ENCODE measurements at regions of chr6 and their contacts with region 1.

Region 1: DNA sequence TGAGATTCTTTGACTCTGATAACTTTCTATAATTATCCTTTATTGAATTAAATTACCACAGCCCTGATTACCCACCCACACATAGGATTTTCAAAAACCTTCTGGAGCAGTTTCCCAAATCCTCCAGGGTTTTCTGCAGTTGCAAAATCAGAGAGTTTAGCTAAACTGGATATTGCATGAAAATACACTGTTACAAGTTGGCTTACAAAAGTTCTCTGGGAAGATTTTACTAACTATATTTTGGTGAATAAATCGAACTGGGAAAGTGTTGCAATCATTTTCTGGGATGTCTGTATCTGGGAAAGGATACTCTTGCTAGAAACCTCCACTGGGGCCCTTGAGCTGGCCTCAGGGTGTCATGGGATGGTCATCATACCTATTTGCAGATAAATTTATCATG is 97.6 kb upstream of the STMND1 start:
- DNase-seq: no peak
- ATAC-seq: no peak
- H3K4me3 Mint-ChIP-seq: no peak overlapping the region
- H3K27ac Mint-ChIP-seq: no peak overlapping the region
- H3K4me1 Mint-ChIP-seq: no peaks in the 10 kb centered on the region
- H3K27me3 Mint-ChIP-seq: peaks cover 8% of the 10 kb centered on the region
- CTCF ChIP-seq: no peak

Region 2: DNA sequence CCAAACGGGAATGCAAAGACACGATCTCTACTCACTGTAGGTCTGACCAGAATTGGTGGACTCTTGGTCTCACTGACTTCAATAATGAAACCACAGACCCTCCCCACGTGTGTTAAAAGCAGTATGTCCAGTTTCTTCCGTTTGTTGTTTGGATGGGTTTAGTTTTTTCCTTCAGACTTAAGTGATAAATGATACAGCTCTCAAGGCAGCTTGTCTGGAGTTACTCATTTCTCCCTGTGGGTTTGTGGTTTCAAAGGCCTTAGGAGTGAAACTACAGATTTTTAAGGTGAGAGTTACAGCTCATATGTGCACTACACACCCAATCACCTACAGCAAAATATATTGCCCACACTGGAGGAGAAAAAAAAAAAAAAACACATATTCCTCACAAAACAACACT is 10.9 kb after region 1 on chr6:
- CTCF ChIA-PET with region 1: no interaction called
- POLR2A ChIA-PET with region 1: interaction called, 10 read pairs
- intact Hi-C with region 1: no loop called
- DNase-seq: no peak
- ATAC-seq: no peak
- H3K4me3 Mint-ChIP-seq: peak overlapping the region; percentile 52
- H3K27ac Mint-ChIP-seq: no peak overlapping the region
- H3K4me1 Mint-ChIP-seq: peaks cover 6% of the 10 kb centered on the region
- H3K27me3 Mint-ChIP-seq: peaks cover 21% of the 10 kb centered on the region
- CTCF ChIP-seq: no peak

Region 3: GRCh38 chr6:17226786-17227233 is 222.5 kb after region 1 on chr6:
- CTCF ChIA-PET with region 1: no interaction called
- POLR2A ChIA-PET with region 1: no interaction called
- intact Hi-C with region 1: no loop called
- DNase-seq: no peak
- ATAC-seq: no peak
- H3K4me3 Mint-ChIP-seq: no peak overlapping the region
- H3K27ac Mint-ChIP-seq: no peak overlapping the region
- H3K4me1 Mint-ChIP-seq: no peaks in the 10 kb centered on the region
- H3K27me3 Mint-ChIP-seq: peaks cover 1% of the 10 kb centered on the region
- CTCF ChIP-seq: no peak

Measured in activated B cell treated with CpG ODN at 0.5 μM for 24 hours (primary cell).